Activated T-helper 1 cell treated with anti-CD3 and anti-CD28 coated beads, Interleukin-12 subunit alpha, Interleukin-12 subunit beta, Interleukin-2, Interleukin-4 antibody, amounts not matched to agents 30 ng/mL and 10 ng/mL and 1 ng/mL, durations not matched to agents 14 hours and 24 hours and 36 hours (primary cell): ENCODE measurements at regions of chr22 and their contacts with region 1.

Region 1: GRCh38 chr22:42070517-42071422 is at the start of gene NAGA:
- DNase-seq: peak; percentile 91
- H3K4me3 Mint-ChIP-seq: peak within 1 kb of the TSS; percentile 92
- H3K27ac Mint-ChIP-seq: peak within 1 kb of the TSS; percentile 94
- H3K4me1 Mint-ChIP-seq: peaks cover 53% of the 10 kb centered on the region
- H3K27me3 Mint-ChIP-seq: peaks cover 2% of the 10 kb centered on the region
- total RNA-seq, gene NAGA: 30.5 and 30.9 TPM in 2 replicates

Region 2: DNA sequence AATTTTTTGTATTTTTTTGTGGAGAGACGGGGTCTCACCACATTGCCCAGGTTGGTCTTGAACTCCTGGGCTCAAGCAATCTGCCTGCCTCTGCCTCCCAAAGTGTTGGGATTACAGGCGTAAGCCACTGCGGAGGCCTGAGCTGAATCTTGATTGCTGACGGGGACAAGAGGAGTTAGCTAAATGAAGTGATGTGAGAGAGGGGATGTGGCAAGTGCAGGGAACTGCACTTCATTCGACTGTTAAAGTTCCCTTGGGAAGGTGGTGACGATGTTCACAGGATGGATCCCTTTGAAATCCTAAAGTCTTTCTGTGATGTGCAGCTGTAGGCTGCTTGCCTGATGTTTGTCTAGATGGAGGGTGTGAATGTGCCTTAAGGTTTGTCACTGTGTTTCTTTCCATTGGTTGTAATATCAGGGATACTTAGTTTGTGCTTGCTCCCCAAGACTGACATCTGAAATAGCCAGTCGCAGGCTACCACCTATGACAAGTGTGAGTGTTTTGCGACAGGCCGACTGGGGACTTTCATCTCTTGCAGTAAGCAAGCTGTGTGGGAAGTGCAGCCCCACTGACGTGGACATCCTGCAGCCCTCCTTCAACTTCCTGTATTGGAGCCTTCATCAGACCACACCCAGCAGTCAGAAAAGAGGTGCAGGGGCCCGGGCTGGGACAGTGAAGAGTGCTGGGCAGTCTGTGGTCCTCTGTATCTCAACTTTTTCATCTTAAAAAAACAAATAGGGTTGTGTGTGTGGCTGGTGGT is 289.8 kb before region 1 on chr22:
- intact Hi-C with region 1: loop called (anchors 1 kb)
- DNase-seq: peak; percentile 90
- H3K4me3 Mint-ChIP-seq: peak overlapping the region; percentile 83
- H3K27ac Mint-ChIP-seq: peak overlapping the region; percentile 91
- H3K4me1 Mint-ChIP-seq: peaks cover 41% of the 10 kb centered on the region
- H3K27me3 Mint-ChIP-seq: peaks cover 2% of the 10 kb centered on the region

Region 3: GRCh38 chr22:41957941-41958556 is 112.7 kb before region 1 on chr22:
- intact Hi-C with region 1: loop called (anchors 1 kb)
- DNase-seq: no peak
- H3K4me3 Mint-ChIP-seq: no peak overlapping the region
- H3K27ac Mint-ChIP-seq: peak overlapping the region; percentile 8
- H3K4me1 Mint-ChIP-seq: peaks cover 5% of the 10 kb centered on the region
- H3K27me3 Mint-ChIP-seq: peaks cover 4% of the 10 kb centered on the region

Region 4: GRCh38 chr22:41998361-41999275 is 72.2 kb before region 1 on chr22 and contains the start of gene WBP2NL:
- intact Hi-C with region 1: loop called (anchors 1 kb)
- DNase-seq: peak; percentile 88
- H3K4me3 Mint-ChIP-seq: peak within 1 kb of the TSS; percentile 91
- H3K27ac Mint-ChIP-seq: peak within 1 kb of the TSS; percentile 95
- H3K4me1 Mint-ChIP-seq: peaks cover 40% of the 10 kb centered on the region
- H3K27me3 Mint-ChIP-seq: peaks cover 1% of the 10 kb centered on the region
- total RNA-seq, gene WBP2NL: 1.5 and 2.3 TPM in 2 replicates

Region 5: GRCh38 chr22:42614312-42615091 is 543.7 kb after region 1 on chr22 and contains the start of gene POLDIP3:
- intact Hi-C with region 1: loop called (anchors 2 kb)
- DNase-seq: peak; percentile 98
- H3K4me3 Mint-ChIP-seq: peak within 1 kb of the TSS; percentile 92
- H3K27ac Mint-ChIP-seq: peak within 1 kb of the TSS; percentile 98
- H3K4me1 Mint-ChIP-seq: peaks cover 33% of the 10 kb centered on the region
- H3K27me3 Mint-ChIP-seq: no peaks in the 10 kb centered on the region
- total RNA-seq, gene POLDIP3: 77.9 and 87.2 TPM in 2 replicates